Pancreas (tissue), 10 donors: ENCODE measurements at regions of chr9 and their contacts with region 1.

Region 1: DNA sequence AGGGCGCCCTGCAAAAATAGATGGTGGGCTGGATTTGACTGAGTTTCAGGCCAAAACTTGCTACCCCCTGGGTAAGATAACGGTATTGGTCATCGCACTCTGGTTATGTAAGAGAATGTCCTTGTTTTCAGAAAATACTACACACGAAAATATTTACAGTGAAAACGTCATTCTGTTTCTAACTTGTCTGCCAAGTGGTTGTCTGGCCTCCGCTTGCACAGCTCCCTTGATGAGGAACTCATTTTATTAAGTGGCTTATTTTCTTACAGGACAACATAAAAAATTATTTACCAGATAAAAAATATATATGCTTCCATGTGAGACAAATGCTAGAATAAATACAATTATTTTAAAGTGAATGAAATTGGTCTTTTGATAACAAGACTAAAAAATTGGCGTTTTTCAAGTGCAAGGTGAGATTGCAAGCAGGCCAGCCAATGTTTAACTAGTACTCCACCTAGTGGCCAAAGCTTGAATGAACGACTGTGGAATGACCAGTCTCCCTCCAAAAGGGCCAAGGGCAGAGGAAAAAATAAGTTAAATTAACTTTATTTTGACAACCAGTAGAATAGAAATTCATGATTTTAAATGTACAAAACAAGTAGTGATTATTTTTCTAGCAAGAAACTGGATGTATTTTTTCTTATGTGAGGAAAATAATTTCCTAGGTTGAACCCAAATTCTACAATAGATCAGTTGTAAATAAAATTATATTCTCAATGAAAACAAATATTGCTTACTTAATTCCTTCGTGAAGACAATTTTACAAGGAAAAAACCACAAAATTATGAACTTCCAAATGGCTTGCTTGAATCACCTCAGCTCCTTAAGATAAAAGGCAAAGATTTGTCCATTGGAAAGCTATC is 93.2 kb downstream of the ZFAND5 start:
- DNase-seq: peak in 3 of 6 donors; percentile 29 to 65 (median 41)
- ATAC-seq: peak; percentile 66 to 91 (median 87)
- H3K4me3 ChIP-seq: no peak overlapping the region
- H3K27ac ChIP-seq: no peak overlapping the region
- H3K4me1 ChIP-seq: no peaks in the 10 kb centered on the region
- H3K27me3 ChIP-seq: no peaks in the 10 kb centered on the region
- CTCF ChIP-seq: peak; percentile 71 to 90 (median 76)

Region 2: GRCh38 chr9:71179183-71179582 is 1092.7 kb before region 1 on chr9:
- intact Hi-C with region 1: no loop called
- DNase-seq: no peak
- ATAC-seq: no peak
- H3K4me3 ChIP-seq: no peak overlapping the region
- H3K27ac ChIP-seq: no peak overlapping the region
- H3K4me1 ChIP-seq: no peaks in the 10 kb centered on the region
- H3K27me3 ChIP-seq: no peaks in the 10 kb centered on the region
- CTCF ChIP-seq: no peak

Region 3: GRCh38 chr9:72038890-72039410 is 232.9 kb before region 1 on chr9:
- intact Hi-C with region 1: loop called (anchors 5 to 10 kb)
- DNase-seq: peak; percentile 47 to 86 (median 74)
- ATAC-seq: peak; percentile 79 to 98 (median 92)
- H3K4me3 ChIP-seq: no peak overlapping the region
- H3K27ac ChIP-seq: no peak overlapping the region
- H3K4me1 ChIP-seq: no peaks in the 10 kb centered on the region
- H3K27me3 ChIP-seq: no peaks in the 10 kb centered on the region
- CTCF ChIP-seq: peak; percentile 81 to 96 (median 94)

Region 4: GRCh38 chr9:72156586-72156985 is 115.3 kb before region 1 on chr9:
- intact Hi-C with region 1: no loop called
- DNase-seq: no peak
- ATAC-seq: no peak
- H3K4me3 ChIP-seq: no peak overlapping the region
- H3K27ac ChIP-seq: no peak overlapping the region
- H3K4me1 ChIP-seq: no peaks in the 10 kb centered on the region
- H3K27me3 ChIP-seq: no peaks in the 10 kb centered on the region
- CTCF ChIP-seq: no peak

Region 5: GRCh38 chr9:72524820-72525540 is 253.1 kb after region 1 on chr9:
- intact Hi-C with region 1: no loop called
- DNase-seq: peak in 4 of 6 donors; percentile 59 to 75 (median 68)
- ATAC-seq: peak; percentile 85 to 93 (median 88)
- H3K4me3 ChIP-seq: no peak overlapping the region
- H3K27ac ChIP-seq: peak overlapping the region in 3 of 4 donors; percentile 12 to 67 (median 56)
- H3K4me1 ChIP-seq: peaks cover 0 to 13% (median 6%) of the 10 kb centered on the region in 3 donors
- H3K27me3 ChIP-seq: no peaks in the 10 kb centered on the region
- CTCF ChIP-seq: no peak